K562 (cell line): ENCODE measurements at regions of chr12 and their contacts with region 1.

Region 1: DNA sequence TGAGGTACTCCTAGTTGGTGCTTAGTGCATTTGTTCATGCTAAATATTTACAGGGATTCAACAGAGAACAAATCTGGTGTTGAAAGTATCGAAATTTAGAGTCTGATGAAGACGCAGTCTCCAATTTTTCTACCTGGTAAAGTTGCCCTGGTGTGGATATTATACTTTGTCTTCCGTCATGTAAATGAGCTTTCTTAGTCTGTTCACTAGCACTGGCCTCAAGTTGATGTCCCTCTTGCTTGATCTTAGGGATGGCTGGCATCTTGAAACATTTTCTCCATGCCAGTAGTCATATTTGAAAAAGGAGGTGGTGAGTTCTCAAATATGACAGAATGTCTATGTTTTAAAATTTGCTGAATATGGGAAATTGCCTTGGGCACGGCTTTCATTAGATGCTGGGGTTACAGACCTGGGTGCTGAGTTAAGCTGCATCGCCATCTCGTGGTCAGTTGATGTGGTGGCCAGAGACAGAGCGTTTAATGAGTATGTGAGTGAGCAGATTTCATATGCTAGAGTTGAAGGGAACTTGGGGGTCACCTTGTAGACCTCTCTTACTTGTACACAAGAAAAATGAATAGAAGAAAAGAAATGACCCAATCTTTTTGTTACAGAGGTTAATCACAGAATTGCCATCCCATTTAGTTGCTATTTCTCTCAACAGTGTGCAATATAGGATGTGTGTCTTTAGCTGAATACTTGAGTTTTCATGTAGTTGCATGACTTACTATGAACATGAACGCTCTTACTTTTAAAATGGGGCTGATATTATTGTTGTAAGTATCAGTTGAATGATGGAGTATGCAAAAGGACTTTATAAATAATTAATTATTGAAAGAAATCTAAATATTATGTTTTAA is 172.8 kb upstream of the DCN start:
- DNase-seq: peak; percentile 41 to 68 (median 48)
- ATAC-seq: peak; percentile 99
- H3K4me3 ChIP-seq: no peak overlapping the region
- H3K27ac ChIP-seq: no peak overlapping the region
- H3K4me1 ChIP-seq: no peaks in the 10 kb centered on the region
- H3K27me3 ChIP-seq: no peaks in the 10 kb centered on the region
- CTCF ChIP-seq: peak; percentile 66 to 84 (median 73)
- EP300 ChIP-seq: no peak
- POLR2A ChIP-seq: no peak
- RAD21 ChIP-seq: peak; percentile 36 to 58; a peak in 3 of 4 replicates

Region 2: DNA sequence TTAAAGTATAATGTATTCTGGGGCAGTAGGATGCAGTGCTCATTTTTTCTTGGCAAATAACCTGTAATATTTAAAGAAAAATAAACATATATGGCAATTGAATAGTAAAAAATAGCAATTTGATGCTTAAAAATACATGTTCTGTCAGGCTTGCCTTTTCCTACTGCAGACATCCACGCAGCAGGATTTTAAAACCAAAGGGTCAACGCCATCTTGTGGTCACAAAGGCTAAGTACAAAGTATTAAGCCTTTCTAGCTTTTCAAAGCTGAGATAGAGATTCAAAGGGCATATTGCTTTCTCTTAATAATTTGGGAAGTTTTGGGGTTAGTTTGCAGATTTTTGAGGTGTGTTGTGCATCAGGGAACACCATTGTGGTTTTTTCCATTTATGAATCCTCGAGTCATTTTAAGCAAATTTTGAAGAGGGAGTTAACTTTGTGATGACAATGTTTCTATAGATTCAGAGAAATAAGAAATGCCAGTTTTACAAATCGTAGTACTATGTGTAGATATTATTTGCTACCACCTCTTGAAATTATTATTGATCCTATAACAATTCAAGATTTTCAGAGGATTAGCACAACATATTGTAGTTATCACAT is 395.7 kb before region 1 on chr12:
- CTCF ChIA-PET with region 1: no interaction called
- POLR2A ChIA-PET with region 1: no interaction called
- in situ Hi-C with region 1: no loop called
- intact Hi-C with region 1: loop called (anchors 5 kb)
- DNase-seq: peak; percentile 13 to 50 (median 28)
- ATAC-seq: peak; percentile 82
- H3K4me3 ChIP-seq: no peak overlapping the region
- H3K27ac ChIP-seq: no peak overlapping the region
- H3K4me1 ChIP-seq: peaks cover 0 to 3% of the 10 kb centered on the region in 2 experiments; a peak in 1 of 5 replicates
- H3K27me3 ChIP-seq: no peaks in the 10 kb centered on the region
- CTCF ChIP-seq: peak; percentile 62 to 67 (median 66)
- EP300 ChIP-seq: no peak
- POLR2A ChIP-seq: no peak
- RAD21 ChIP-seq: peak; percentile 43 to 66; a peak in 3 of 4 replicates

Region 3: DNA sequence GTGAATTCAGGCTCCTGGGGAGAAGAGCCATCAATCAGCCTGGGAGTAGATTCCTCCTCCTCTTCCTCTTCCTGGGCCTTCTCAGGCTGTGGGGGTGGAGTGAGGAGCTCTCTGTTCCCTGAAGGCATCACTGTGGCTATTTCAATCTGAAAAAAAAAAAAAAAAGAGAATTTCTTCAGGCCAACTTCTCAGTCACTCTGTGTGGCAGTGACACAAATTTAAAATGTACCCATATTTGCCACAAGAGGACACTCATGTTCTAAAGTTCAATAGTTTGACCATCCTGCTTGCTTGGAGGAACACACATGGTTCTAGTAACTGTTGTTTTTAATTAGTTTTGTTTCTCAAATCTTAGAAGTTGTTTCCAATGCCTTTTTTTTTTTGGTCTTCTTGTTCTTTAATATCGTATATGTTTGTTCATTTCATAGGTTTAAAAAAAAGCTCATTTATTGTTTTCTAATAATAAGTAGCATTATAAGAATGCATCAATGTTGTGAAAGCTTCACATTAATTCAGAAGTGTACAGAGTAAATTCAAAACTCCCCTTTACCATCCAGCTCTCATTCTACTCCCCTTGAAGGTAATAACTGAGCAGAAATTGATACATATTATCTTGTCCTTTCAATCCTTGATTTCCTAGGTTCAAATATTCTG is 377.1 kb before region 1 on chr12:
- CTCF ChIA-PET with region 1: interaction called, 7 read pairs
- POLR2A ChIA-PET with region 1: no interaction called
- in situ Hi-C with region 1: no loop called
- intact Hi-C with region 1: loop called (anchors 5 kb)
- DNase-seq: peak in 3 of 4 experiments; percentile 9 to 25 (median 14)
- ATAC-seq: peak; percentile 76
- H3K4me3 ChIP-seq: no peak overlapping the region
- H3K27ac ChIP-seq: no peak overlapping the region
- H3K4me1 ChIP-seq: no peaks in the 10 kb centered on the region
- H3K27me3 ChIP-seq: no peaks in the 10 kb centered on the region
- CTCF ChIP-seq: peak; percentile 40 to 60 (median 45); a peak in 4 of 6 replicates
- EP300 ChIP-seq: no peak
- POLR2A ChIP-seq: no peak
- RAD21 ChIP-seq: peak; percentile 45 to 67

Region 4: GRCh38 chr12:91178139-91178561 is 177.2 kb before region 1 on chr12:
- CTCF ChIA-PET with region 1: no interaction called
- POLR2A ChIA-PET with region 1: no interaction called
- in situ Hi-C with region 1: no loop called
- intact Hi-C with region 1: loop called (anchors 1 kb)
- DNase-seq: peak in 1 of 4 experiments; percentile 1
- ATAC-seq: peak; percentile 69
- H3K4me3 ChIP-seq: no peak overlapping the region
- H3K27ac ChIP-seq: no peak overlapping the region
- H3K4me1 ChIP-seq: no peaks in the 10 kb centered on the region
- H3K27me3 ChIP-seq: no peaks in the 10 kb centered on the region
- CTCF ChIP-seq: peak; percentile 11 to 51 (median 30); a peak in 4 of 6 replicates
- EP300 ChIP-seq: no peak
- POLR2A ChIP-seq: no peak
- RAD21 ChIP-seq: peak; percentile 38 to 63; a peak in 3 of 4 replicates